ENCODE measurements at regions of chr19 and their contacts with region 1.

Region 1: GRCh38 chr19:47428177-47428894 is 9.0 kb upstream of the MEIS3 start:
- DNase-seq: peak; percentile 80 to 87
- ATAC-seq: peak; percentile 56

Region 2: GRCh38 chr19:47284324-47284899 is 143.9 kb before region 1 on chr19:
- intact Hi-C with region 1: no loop called
- DNase-seq: no peak
- ATAC-seq: peak; percentile 46

Region 3: GRCh38 chr19:47296036-47296435 is 132.3 kb before region 1 on chr19:
- intact Hi-C with region 1: loop called in 1 of 2 experiments (anchors 10 kb)
- DNase-seq: peak; percentile 64 to 80
- ATAC-seq: peak; percentile 95

Region 4: GRCh38 chr19:47471733-47472457 is 43.6 kb after region 1 on chr19 and contains the start of gene SLC8A2:
- intact Hi-C with region 1: no loop called
- DNase-seq: peak; percentile 57 to 74
- ATAC-seq: peak; percentile 75
- total RNA-seq, gene SLC8A2: 0.09 to 2.2 TPM

Region 5: DNA sequence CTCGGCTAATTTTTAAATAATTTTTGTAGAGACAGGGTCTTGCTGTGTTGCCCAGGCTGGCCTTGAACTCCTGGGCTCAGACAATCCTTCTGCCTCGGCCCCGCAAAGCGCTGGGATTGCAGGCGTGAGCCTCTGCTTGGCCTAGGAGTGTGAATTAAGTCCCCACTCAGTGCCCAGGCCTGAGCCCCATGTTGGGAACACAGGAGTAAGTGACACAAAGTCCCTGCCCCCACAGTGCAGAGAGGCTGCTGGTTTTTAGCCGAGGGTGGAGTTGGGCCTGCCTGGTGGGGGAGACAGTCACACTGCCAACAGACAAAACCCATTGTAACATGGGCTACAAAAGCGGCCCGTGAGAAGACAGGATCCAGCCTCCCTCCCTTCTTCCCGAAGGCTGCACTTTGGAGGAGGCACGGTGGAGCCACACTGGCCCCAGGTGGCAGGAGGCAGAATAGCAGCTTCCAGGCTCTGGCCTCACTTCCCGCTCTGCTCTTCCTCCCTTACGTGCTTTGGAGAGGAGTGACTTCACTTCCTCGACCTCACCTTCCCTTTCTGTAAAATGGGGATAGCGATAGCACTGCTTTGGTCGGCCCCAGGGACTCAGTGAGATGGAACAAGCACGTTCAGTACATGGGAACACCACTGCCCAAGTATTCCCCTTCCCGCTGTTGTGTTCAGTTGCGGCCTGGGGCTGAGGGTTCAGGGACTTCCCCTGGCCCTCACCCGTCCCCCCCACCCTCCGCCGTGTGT is 269.7 kb after region 1 on chr19:
- intact Hi-C with region 1: loop called in 1 of 2 experiments (anchors 5 kb)
- DNase-seq: peak; percentile 71 to 75
- ATAC-seq: peak; percentile 94